ENCODE measurements at regions of chr4 and their contacts with region 1.

Region 1: GRCh38 chr4:40316782-40317635 is 18.1 kb upstream of the CHRNA9 start:
- DNase-seq: peak; percentile 71
- ATAC-seq: peak; percentile 74
- H3K4me3 Mint-ChIP-seq: peak overlapping the region; percentile 81
- H3K27ac Mint-ChIP-seq: peak overlapping the region; percentile 99
- H3K4me1 Mint-ChIP-seq: peaks cover 62% of the 10 kb centered on the region
- H3K27me3 Mint-ChIP-seq: no peaks in the 10 kb centered on the region
- CTCF ChIP-seq: peak; percentile 90

Region 2: GRCh38 chr4:39697740-39698423 is 619.1 kb before region 1 on chr4 and contains the start of gene UBE2K:
- CTCF ChIA-PET with region 1: no interaction called
- POLR2A ChIA-PET with region 1: no interaction called
- intact Hi-C with region 1: loop called (anchors 10 kb)
- DNase-seq: peak; percentile 87
- ATAC-seq: peak; percentile 84
- H3K4me3 Mint-ChIP-seq: peak within 1 kb of the TSS; percentile 92
- H3K27ac Mint-ChIP-seq: peak within 1 kb of the TSS; percentile 98
- H3K4me1 Mint-ChIP-seq: peaks cover 27% of the 10 kb centered on the region
- H3K27me3 Mint-ChIP-seq: no peaks in the 10 kb centered on the region
- CTCF ChIP-seq: no peak
- total RNA-seq, gene UBE2K: 69.5 to 77.1 TPM

Region 3: DNA sequence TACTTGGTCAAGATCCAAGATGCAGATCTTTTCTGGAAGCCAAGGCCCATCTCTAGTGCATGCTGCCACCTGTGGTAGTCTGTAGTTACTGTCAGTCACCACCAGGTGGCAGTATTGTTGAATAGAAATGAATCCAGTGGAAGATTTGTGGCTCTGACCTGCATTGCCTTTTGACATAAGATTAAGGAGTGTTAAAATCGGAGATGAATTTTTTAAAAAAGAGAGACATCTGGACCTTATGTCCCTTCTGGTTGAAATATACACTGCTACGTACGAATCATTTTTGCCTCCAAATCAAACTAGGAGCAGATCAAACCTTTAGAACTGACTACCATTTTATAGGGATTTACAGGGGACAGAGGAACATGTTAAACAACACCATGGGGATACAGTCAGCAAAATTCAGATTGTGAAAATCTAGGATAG is 167.0 kb before region 1 on chr4:
- CTCF ChIA-PET with region 1: interaction called, 13 read pairs
- POLR2A ChIA-PET with region 1: no interaction called
- intact Hi-C with region 1: no loop called
- DNase-seq: peak; percentile 83
- ATAC-seq: peak; percentile 98
- H3K4me3 Mint-ChIP-seq: no peak overlapping the region
- H3K27ac Mint-ChIP-seq: peak overlapping the region; percentile 68
- H3K4me1 Mint-ChIP-seq: peaks cover 41% of the 10 kb centered on the region
- H3K27me3 Mint-ChIP-seq: no peaks in the 10 kb centered on the region
- CTCF ChIP-seq: peak; percentile 95

Region 4: GRCh38 chr4:40199999-40200874 is 116.8 kb before region 1 on chr4:
- CTCF ChIA-PET with region 1: interaction called, 40 read pairs
- POLR2A ChIA-PET with region 1: interaction called, 326 read pairs
- intact Hi-C with region 1: no loop called
- DNase-seq: peak; percentile 94
- ATAC-seq: peak; percentile 50
- H3K4me3 Mint-ChIP-seq: peak overlapping the region; percentile 99
- H3K27ac Mint-ChIP-seq: peak overlapping the region; percentile 99
- H3K4me1 Mint-ChIP-seq: peaks cover 23% of the 10 kb centered on the region
- H3K27me3 Mint-ChIP-seq: no peaks in the 10 kb centered on the region
- CTCF ChIP-seq: no peak

Region 5: GRCh38 chr4:40228497-40229365 is 88.3 kb before region 1 on chr4:
- CTCF ChIA-PET with region 1: interaction called, 120 read pairs
- POLR2A ChIA-PET with region 1: interaction called, 128 read pairs
- intact Hi-C with region 1: no loop called
- DNase-seq: peak; percentile 74
- ATAC-seq: peak; percentile 35
- H3K4me3 Mint-ChIP-seq: peak overlapping the region; percentile 64
- H3K27ac Mint-ChIP-seq: peak overlapping the region; percentile 96
- H3K4me1 Mint-ChIP-seq: peaks cover 86% of the 10 kb centered on the region
- H3K27me3 Mint-ChIP-seq: no peaks in the 10 kb centered on the region
- CTCF ChIP-seq: peak; percentile 70

Region 6: DNA sequence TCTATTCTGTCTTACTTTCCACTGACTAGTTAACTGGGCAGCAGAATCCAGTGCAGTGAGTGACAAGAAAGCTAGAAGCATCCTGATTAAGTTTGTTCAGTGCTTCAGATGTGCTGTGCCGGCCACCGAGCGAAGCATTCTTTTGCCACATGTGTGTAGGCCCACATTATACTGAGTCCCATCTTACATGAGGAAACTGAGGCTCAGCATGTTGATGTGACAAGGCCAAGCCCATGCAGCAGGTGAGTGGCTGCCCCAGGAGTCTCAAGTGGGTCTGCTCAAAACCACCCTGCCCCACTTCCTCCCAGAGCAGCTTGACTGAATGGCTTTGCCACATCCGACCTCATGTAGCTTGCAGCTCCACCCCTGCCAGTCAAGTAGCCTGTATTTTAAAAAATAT is 69.7 kb before region 1 on chr4:
- CTCF ChIA-PET with region 1: interaction called, 12 read pairs
- POLR2A ChIA-PET with region 1: interaction called, 9 read pairs
- intact Hi-C with region 1: no loop called
- DNase-seq: peak; percentile 80
- ATAC-seq: peak; percentile 55
- H3K4me3 Mint-ChIP-seq: peak overlapping the region; percentile 77
- H3K27ac Mint-ChIP-seq: peak overlapping the region; percentile 95
- H3K4me1 Mint-ChIP-seq: peaks cover 75% of the 10 kb centered on the region
- H3K27me3 Mint-ChIP-seq: no peaks in the 10 kb centered on the region
- CTCF ChIP-seq: no peak